Activated T-helper 1 cell treated with anti-CD3 and anti-CD28 coated beads, Interleukin-12 subunit alpha, Interleukin-12 subunit beta, Interleukin-2, Interleukin-4 antibody, amounts not matched to agents 30 ng/mL and 10 ng/mL and 1 ng/mL, durations not matched to agents 14 hours and 24 hours and 36 hours (primary cell): ENCODE measurements at regions of chr1 and their contacts with region 1.

Region 1: GRCh38 chr1:211830330-211831142 is at the start of gene LPGAT1:
- DNase-seq: peak; percentile 65
- H3K4me3 Mint-ChIP-seq: peak within 1 kb of the TSS; percentile 91
- H3K27ac Mint-ChIP-seq: peak within 1 kb of the TSS; percentile 90
- H3K4me1 Mint-ChIP-seq: peaks cover 69% of the 10 kb centered on the region
- H3K27me3 Mint-ChIP-seq: peaks cover 2% of the 10 kb centered on the region
- total RNA-seq, gene LPGAT1: 35.3 and 35.6 TPM in 2 replicates

Region 2: GRCh38 chr1:211393203-211393602 is 437.3 kb before region 1 on chr1:
- intact Hi-C with region 1: no loop called
- DNase-seq: no peak
- H3K4me3 Mint-ChIP-seq: no peak overlapping the region
- H3K27ac Mint-ChIP-seq: no peak overlapping the region
- H3K4me1 Mint-ChIP-seq: no peaks in the 10 kb centered on the region
- H3K27me3 Mint-ChIP-seq: no peaks in the 10 kb centered on the region

Region 3: GRCh38 chr1:211698161-211699026 is 132.1 kb before region 1 on chr1:
- intact Hi-C with region 1: loop called (anchors 2 kb)
- DNase-seq: peak; percentile 75
- H3K4me3 Mint-ChIP-seq: peak overlapping the region; percentile 41
- H3K27ac Mint-ChIP-seq: no peak overlapping the region
- H3K4me1 Mint-ChIP-seq: peaks cover 36% of the 10 kb centered on the region
- H3K27me3 Mint-ChIP-seq: peaks cover 15% of the 10 kb centered on the region

Region 4: DNA sequence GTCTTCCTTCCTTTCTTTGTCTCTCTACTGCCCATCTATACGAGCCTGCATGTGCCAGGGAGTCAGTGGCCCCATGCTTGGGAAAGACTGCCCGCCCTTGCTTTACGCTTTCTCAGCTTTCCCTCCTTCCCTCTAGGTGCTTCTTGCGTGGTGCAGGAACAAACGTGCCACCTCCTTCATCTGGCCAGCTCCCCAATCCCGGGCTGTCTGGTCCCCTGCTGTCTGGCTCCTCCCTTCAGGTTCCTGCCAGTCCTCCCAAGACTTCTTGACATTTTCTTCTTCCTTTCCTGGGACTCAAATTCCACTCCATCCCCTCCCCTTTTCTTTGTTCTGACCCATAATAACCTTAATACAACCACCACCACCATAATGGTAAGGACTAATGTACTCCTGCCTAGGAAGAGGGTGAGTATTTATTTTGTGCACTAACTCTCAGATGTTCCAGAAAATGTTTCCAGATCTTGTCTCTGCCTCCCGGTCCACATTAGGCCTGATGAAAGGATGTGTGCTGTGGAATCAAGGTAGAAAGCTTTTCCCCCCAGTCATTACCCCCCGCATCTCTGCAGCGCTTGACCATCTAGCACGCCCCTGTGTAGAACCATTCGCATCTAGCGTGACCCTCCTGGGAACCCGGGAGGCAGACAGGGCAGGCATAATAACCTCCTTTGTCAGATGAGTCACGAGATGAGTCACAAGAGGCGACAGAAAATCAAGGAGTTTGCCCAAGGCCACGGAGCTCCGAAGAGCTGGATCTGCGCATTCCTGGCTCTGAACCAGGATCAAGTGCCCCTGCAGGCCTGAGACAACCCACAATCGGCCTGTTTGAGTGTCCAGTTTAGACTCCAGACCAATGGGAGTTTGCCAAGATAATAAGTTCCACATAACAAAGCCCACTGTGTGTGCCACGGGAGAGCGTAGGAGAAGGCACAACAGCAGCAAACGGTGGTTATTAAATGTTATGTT is 95.0 kb before region 1 on chr1:
- intact Hi-C with region 1: loop called (anchors 5 kb)
- DNase-seq: no peak
- H3K4me3 Mint-ChIP-seq: no peak overlapping the region
- H3K27ac Mint-ChIP-seq: no peak overlapping the region
- H3K4me1 Mint-ChIP-seq: peaks cover 25% of the 10 kb centered on the region
- H3K27me3 Mint-ChIP-seq: peaks cover 4% of the 10 kb centered on the region

Region 5: DNA sequence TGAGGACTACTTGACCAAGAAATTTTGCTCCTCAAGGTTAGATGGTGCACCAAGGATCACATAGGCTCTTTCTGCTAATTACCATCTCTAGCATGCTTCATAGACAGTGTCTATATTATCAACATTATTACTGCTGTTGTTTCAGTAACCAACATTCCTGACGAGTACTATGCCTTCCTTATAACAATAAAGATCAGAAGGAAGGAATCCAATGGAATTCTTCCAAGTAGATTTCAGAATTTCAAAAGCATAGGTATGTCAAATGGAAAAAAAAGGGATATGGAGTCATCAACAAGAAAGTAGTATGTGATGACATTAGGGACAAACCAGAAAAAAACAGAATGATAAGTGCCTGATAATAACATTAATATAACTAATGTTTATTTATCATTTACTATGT is 39.6 kb after region 1 on chr1:
- intact Hi-C with region 1: no loop called
- DNase-seq: no peak
- H3K4me3 Mint-ChIP-seq: no peak overlapping the region
- H3K27ac Mint-ChIP-seq: no peak overlapping the region
- H3K4me1 Mint-ChIP-seq: no peaks in the 10 kb centered on the region
- H3K27me3 Mint-ChIP-seq: peaks cover 27% of the 10 kb centered on the region